GM12878 (cell line): ENCODE measurements at regions of chr20 and their contacts with region 1.

Region 1: GRCh38 chr20:3820048-3820900 is at the start of gene AP5S1:
- DNase-seq: peak; percentile 86
- ATAC-seq: peak; percentile 91
- H3K4me3 ChIP-seq: peak within 1 kb of the TSS; percentile 73
- H3K27ac ChIP-seq: peak within 1 kb of the TSS; percentile 99
- H3K4me1 ChIP-seq: peaks cover 5% of the 10 kb centered on the region
- H3K27me3 ChIP-seq: no peaks in the 10 kb centered on the region
- CTCF ChIP-seq: peak; percentile 86 to 96 (median 95)
- EP300 ChIP-seq: 0 out of 4 replicates have a peak, but pooled peaks of 1 of the 2 experiments have one; percentile 15
- POLR2A ChIP-seq: peak; percentile 92
- RAD21 ChIP-seq: peak; percentile 66
- polyA plus RNA-seq, gene AP5S1: 4.4 to 5.8 TPM

Region 2: DNA sequence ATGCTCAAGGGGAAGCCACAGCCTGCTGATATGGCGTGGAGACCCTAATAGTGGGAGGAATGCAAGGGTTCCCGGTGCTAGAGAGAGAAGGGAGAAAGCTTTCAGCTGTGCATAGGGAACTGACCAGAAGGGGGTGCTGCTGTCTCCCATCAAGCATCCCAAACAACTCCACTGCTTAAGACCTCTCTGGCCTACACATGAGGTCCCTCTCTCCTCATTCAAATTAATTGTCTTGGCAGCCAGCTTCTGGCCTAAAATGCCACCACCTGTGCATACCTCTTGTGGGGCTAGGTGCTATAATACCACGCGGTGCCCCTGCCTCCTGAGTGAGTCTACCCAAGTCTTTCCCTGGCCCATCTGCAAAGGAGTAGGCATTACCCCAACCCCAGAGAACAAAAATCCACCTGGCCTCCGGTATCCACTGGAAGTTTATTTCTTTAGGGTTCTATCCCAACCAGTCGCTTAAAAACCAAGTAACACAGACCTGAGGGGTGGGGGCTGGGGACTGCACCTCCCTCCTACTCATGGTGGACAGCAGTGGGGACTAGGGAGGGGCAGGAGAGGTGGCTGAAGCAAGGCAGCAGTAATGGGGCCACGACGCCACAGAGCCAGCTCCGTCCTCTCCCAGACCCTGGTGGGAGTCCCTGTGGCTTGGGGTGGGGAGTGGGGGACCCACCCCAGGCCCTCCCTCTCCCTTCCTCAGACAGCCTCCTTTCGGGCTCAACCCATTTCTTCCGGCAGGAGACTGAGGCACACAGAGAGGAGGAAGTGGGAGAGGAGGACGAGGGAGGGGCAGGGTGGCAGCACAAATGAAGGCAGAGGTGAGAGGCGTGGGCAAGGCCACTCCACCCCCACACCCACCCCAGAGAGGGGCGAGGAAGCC is 66.9 kb before region 1 on chr20:
- CTCF ChIA-PET with region 1: no interaction called
- POLR2A ChIA-PET with region 1: no interaction called
- RAD21 ChIA-PET with region 1: no interaction called
- SMC1A ChIA-PET with region 1: interaction called, 4 read pairs
- in situ Hi-C with region 1: no loop called
- intact Hi-C with region 1: loop called (anchors 2 kb)
- DNase-seq: no peak
- ATAC-seq: peak; percentile 83
- H3K4me3 ChIP-seq: no peak overlapping the region
- H3K27ac ChIP-seq: no peak overlapping the region
- H3K4me1 ChIP-seq: no peaks in the 10 kb centered on the region
- H3K27me3 ChIP-seq: no peaks in the 10 kb centered on the region
- CTCF ChIP-seq: peak; percentile 68 to 79 (median 78)
- EP300 ChIP-seq: no peak
- POLR2A ChIP-seq: no peak
- RAD21 ChIP-seq: peak; percentile 64

Region 3: DNA sequence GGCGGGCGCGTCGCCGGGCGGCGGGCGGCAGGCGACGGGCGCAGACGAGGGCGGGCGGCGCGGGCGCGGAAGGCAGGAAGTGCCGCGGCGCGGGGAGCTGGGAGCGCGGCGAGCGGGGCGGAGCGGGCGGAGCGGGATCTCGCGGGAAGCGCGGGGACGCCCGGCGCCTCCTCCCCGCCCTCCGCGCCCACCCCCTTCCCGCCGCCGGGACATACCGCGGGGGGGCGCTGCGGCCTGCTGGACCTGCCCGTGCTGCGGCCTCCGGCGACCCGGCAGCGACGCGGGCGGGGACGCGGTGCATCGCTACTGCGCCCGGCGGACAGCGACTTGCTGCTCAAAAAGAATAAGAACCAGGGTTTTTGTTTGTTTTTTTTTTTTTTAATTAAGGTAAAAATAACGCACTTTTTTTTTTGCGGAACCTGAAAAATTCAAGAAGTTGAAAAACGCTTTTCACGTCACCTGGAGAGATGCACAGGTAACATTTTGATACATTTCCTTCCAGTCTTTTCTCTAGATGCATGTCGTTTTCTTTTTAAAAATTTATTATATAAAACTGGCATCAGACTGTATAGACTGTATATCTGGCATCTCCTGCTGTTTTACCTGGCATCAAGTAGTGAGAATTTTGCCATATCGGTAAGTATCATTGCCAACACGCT is 33.5 kb before region 1 on chr20 and contains the start of gene CENPB:
- CTCF ChIA-PET with region 1: interaction called, 85 read pairs
- POLR2A ChIA-PET with region 1: interaction called, 12 read pairs
- RAD21 ChIA-PET with region 1: interaction called, 26 read pairs
- SMC1A ChIA-PET with region 1: interaction called, 43 read pairs
- in situ Hi-C with region 1: no loop called
- intact Hi-C with region 1: loop called (anchors 1 kb)
- DNase-seq: no peak
- ATAC-seq: peak; percentile 97
- H3K4me3 ChIP-seq: peak within 1 kb of the TSS; percentile 82
- H3K27ac ChIP-seq: peak within 1 kb of the TSS; percentile 50
- H3K4me1 ChIP-seq: peaks cover 17% of the 10 kb centered on the region
- H3K27me3 ChIP-seq: no peaks in the 10 kb centered on the region
- CTCF ChIP-seq: peak; percentile 70 to 86 (median 71)
- EP300 ChIP-seq: no peak
- POLR2A ChIP-seq: 0 out of 2 replicates have a peak, but pooled peaks have one; percentile 54
- RAD21 ChIP-seq: peak; percentile 84
- polyA plus RNA-seq, gene CENPB: 0.16 to 0.29 TPM

Region 4: GRCh38 chr20:3795511-3796468 is 24.5 kb before region 1 on chr20 and contains the start of gene CDC25B:
- CTCF ChIA-PET with region 1: interaction called, 33 read pairs
- POLR2A ChIA-PET with region 1: interaction called, 7 read pairs
- RAD21 ChIA-PET with region 1: interaction called, 6 read pairs
- SMC1A ChIA-PET with region 1: interaction called, 6 read pairs
- in situ Hi-C with region 1: no loop called
- intact Hi-C with region 1: loop called (anchors 2 kb)
- DNase-seq: peak; percentile 59
- ATAC-seq: peak; percentile 83
- H3K4me3 ChIP-seq: peak within 1 kb of the TSS; percentile 77
- H3K27ac ChIP-seq: peak within 1 kb of the TSS; percentile 81
- H3K4me1 ChIP-seq: peaks cover 36% of the 10 kb centered on the region
- H3K27me3 ChIP-seq: no peaks in the 10 kb centered on the region
- CTCF ChIP-seq: peak in 2 of 3 experiments; percentile 12 to 48; a peak in 2 of 6 replicates
- EP300 ChIP-seq: 0 out of 4 replicates have a peak, but pooled peaks of 1 of the 2 experiments have one; percentile 15
- POLR2A ChIP-seq: peak; percentile 74
- RAD21 ChIP-seq: no peak; the same call in 1 of the 2 replicates
- polyA plus RNA-seq, gene CDC25B: 4.6 to 8.6 TPM

Region 5: GRCh38 chr20:3846740-3847428 is 26.6 kb after region 1 on chr20 and contains the start of gene MAVS:
- CTCF ChIA-PET with region 1: interaction called, 4 read pairs
- POLR2A ChIA-PET with region 1: interaction called, 17 read pairs
- RAD21 ChIA-PET with region 1: interaction called, 8 read pairs
- SMC1A ChIA-PET with region 1: interaction called, 14 read pairs
- in situ Hi-C with region 1: no loop called
- intact Hi-C with region 1: loop called (anchors 2 kb)
- DNase-seq: peak; percentile 36
- ATAC-seq: peak; percentile 98
- H3K4me3 ChIP-seq: peak within 1 kb of the TSS; percentile 87
- H3K27ac ChIP-seq: peak within 1 kb of the TSS; percentile 79
- H3K4me1 ChIP-seq: peaks cover 10% of the 10 kb centered on the region
- H3K27me3 ChIP-seq: no peaks in the 10 kb centered on the region
- CTCF ChIP-seq: no peak
- EP300 ChIP-seq: no peak
- POLR2A ChIP-seq: peak; percentile 98
- RAD21 ChIP-seq: no peak
- polyA plus RNA-seq, gene MAVS: 1.6 to 2.0 TPM